ENCODE measurements at regions of chr11 and their contacts with region 1.

Region 1: DNA sequence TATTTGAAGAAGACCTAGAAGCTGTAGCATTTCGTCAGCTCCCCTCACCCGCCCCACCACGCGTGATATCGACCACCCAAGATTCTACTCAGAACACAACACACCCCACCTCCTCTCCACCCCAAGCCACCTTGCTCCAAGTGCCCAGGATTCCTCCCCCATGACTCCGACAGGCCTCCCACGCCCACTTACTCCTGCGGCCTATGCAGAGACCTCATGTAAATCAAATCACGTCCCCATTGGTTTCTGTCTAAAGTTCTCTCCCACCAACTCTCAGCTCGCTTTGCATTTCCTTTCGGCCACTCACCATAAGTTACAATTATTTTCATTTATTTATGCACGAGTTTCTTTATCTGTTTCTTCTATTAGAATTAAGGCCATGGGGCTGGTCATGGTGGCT is 11.0 kb downstream of the TMEM151A start:
- DNase-seq: no peak
- H3K4me3 ChIP-seq: no peak overlapping the region
- H3K27ac ChIP-seq: no peak overlapping the region
- H3K4me1 ChIP-seq: no peaks in the 10 kb centered on the region
- H3K27me3 ChIP-seq: no peaks in the 10 kb centered on the region
- CTCF ChIP-seq: no peak
- EP300 ChIP-seq: no peak
- POLR2A ChIP-seq: no peak

Region 2: GRCh38 chr11:66172143-66172542 is 130.5 kb before region 1 on chr11:
- in situ Hi-C with region 1: no loop called
- intact Hi-C with region 1: no loop called
- DNase-seq: no peak
- H3K4me3 ChIP-seq: no peak overlapping the region
- H3K27ac ChIP-seq: no peak overlapping the region
- H3K4me1 ChIP-seq: no peaks in the 10 kb centered on the region
- H3K27me3 ChIP-seq: no peaks in the 10 kb centered on the region
- CTCF ChIP-seq: no peak
- EP300 ChIP-seq: no peak
- POLR2A ChIP-seq: no peak

Region 3: GRCh38 chr11:66386171-66387069 is 83.8 kb after region 1 on chr11:
- in situ Hi-C with region 1: loop called in 2 of 4 experiments (anchors 10 kb)
- intact Hi-C with region 1: no loop called
- DNase-seq: peak; percentile 88
- H3K4me3 ChIP-seq: peak overlapping the region in 2 of 4 donors; percentile 9 to 34
- H3K27ac ChIP-seq: no peak overlapping the region
- H3K4me1 ChIP-seq: peaks cover 0 to 12% (median 0%) of the 10 kb centered on the region in 4 donors
- H3K27me3 ChIP-seq: peaks cover 14% of the 10 kb centered on the region
- CTCF ChIP-seq: peak; percentile 84 to 97 (median 95)
- EP300 ChIP-seq: no peak
- POLR2A ChIP-seq: no peak

Region 4: GRCh38 chr11:67409261-67409666 is 1106.6 kb after region 1 on chr11:
- in situ Hi-C with region 1: no loop called
- intact Hi-C with region 1: no loop called
- DNase-seq: peak; percentile 77
- H3K4me3 ChIP-seq: peak overlapping the region in 2 of 4 donors; percentile 9 to 18
- H3K27ac ChIP-seq: peak overlapping the region; percentile 61 to 77 (median 68)
- H3K4me1 ChIP-seq: peaks cover 0 to 12% (median 3%) of the 10 kb centered on the region in 4 donors
- H3K27me3 ChIP-seq: peaks cover 26% of the 10 kb centered on the region
- CTCF ChIP-seq: no peak
- EP300 ChIP-seq: no peak
- POLR2A ChIP-seq: no peak

Measured in transverse colon (tissue), 4 donors.